ENCODE measurements at regions of chr13 and their contacts with region 1.

Region 1: DNA sequence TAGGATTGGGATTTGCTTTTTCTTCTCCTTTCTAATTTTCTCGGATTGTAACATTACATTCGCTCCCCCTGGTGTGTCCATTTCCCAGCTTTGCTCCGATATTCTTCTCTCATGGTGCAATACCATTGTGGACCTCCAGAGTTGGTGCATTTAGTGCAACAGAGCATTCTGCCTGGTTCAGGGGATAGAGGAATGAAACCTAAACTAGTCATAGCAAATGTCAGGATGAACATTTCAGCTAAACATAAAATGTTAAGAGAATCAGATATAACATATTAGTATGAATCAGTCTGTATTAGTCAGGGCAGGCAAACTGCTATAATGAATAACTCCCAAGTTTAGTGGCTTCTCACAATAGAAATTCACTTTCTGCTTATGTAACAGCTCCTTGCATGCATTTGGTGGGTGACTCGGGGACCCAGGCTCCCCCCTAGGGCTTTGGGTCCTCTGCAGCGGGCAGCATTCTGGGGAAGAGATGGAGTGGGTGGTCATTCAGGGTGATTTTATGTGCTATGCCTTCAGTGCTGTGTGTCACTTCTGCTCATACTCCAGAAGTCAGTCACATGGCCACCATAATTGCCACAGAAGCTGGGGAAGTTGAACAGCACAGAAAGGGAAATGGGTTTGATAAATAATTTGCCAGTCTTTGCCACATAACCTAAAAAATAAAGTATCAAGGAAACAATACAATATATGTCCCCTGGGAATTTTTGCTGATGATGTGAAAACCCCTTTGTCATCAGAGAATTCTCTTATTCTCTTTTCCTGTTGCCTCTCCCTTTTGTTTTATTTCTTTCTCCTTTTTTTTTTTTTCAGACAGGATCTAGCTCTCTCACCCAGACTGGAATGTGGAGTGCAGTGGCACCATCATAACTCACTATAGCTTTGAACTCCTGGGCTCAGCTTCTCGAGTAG is 111.0 kb downstream of the HSPH1 start:
- DNase-seq: peak in 1 of 3 donors; percentile 28
- H3K4me3 ChIP-seq: no peak overlapping the region
- H3K27ac ChIP-seq: no peak overlapping the region
- H3K4me1 ChIP-seq: peaks cover 0 to 11% (median 7%) of the 10 kb centered on the region in 4 experiments
- H3K27me3 ChIP-seq: peaks cover 7 to 71% (median 22%) of the 10 kb centered on the region in 5 experiments

Region 2: GRCh38 chr13:30932481-30933353 is 118.0 kb before region 1 on chr13 and contains the start of gene TEX26:
- CTCF ChIA-PET with region 1: no interaction called
- POLR2A ChIA-PET with region 1: no interaction called
- DNase-seq: no peak
- H3K4me3 ChIP-seq: no peak within 1 kb of the TSS
- H3K27ac ChIP-seq: no peak within 1 kb of the TSS
- H3K4me1 ChIP-seq: no peaks in the 10 kb centered on the region
- H3K27me3 ChIP-seq: peaks cover 3 to 34% (median 11%) of the 10 kb centered on the region in 5 experiments

Region 3: GRCh38 chr13:30998136-30999088 is 52.3 kb before region 1 on chr13:
- CTCF ChIA-PET with region 1: no interaction called
- POLR2A ChIA-PET with region 1: no interaction called
- DNase-seq: no peak
- H3K4me3 ChIP-seq: no peak overlapping the region
- H3K27ac ChIP-seq: no peak overlapping the region
- H3K4me1 ChIP-seq: no peaks in the 10 kb centered on the region
- H3K27me3 ChIP-seq: peaks cover 3 to 46% (median 16%) of the 10 kb centered on the region in 5 experiments

Region 4: DNA sequence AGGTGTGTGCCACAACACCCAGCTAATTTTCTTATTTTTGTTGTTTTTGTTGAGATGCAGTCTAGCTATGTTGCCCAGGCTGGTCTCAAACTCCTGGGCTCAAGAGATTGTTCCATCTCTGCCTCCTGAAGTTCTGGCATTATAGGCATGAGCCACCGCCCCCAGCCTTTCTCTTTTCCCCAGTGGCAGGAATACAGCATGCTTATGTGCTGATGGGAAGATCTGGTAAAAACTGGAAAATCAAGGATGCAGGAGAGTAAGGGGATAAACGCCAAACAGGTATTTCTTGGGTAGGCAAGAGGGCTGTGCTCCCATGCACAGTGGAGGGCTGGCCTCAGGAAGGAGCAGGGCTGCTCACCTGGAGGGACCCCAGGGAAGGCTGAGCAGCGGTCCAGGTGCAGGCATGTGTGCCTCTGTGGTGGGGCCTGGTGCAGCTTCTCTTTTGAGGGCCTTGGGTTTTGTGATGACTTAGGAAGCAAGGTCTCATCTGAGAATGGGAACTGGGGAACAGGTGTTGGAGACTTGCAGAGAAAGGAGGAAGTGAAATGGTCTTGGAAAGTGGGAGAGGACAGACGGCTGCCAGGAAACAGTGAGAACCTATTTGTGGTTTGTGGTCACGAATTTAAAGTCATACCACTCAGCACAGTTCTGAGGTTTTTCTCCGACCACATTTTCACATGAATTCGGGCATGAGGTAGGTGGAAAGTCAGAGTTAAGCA is 11.8 kb before region 1 on chr13:
- CTCF ChIA-PET with region 1: interaction called, 13 read pairs
- POLR2A ChIA-PET with region 1: no interaction called
- DNase-seq: peak; percentile 63 to 88 (median 83)
- H3K4me3 ChIP-seq: no peak overlapping the region
- H3K27ac ChIP-seq: no peak overlapping the region
- H3K4me1 ChIP-seq: peaks cover 8 to 14% (median 12%) of the 10 kb centered on the region in 4 experiments
- H3K27me3 ChIP-seq: peaks cover 0 to 90% (median 40%) of the 10 kb centered on the region in 5 experiments